ENCODE measurements at regions of chr6 and their contacts with region 1.

Region 1: GRCh38 chr6:114108119-114109002 is 137.4 kb upstream of the HDAC2 start:
- DNase-seq: peak in 1 of 2 experiments; percentile 87
- H3K4me3 ChIP-seq: no peak overlapping the region
- H3K27ac ChIP-seq: no peak overlapping the region
- H3K4me1 ChIP-seq: no peaks in the 10 kb centered on the region
- H3K27me3 ChIP-seq: no peaks in the 10 kb centered on the region
- CTCF ChIP-seq: peak; percentile 47 to 76 (median 73)
- EP300 ChIP-seq: no peak
- POLR2A ChIP-seq: no peak
- RAD21 ChIP-seq: peak; percentile 69 to 79

Region 2: DNA sequence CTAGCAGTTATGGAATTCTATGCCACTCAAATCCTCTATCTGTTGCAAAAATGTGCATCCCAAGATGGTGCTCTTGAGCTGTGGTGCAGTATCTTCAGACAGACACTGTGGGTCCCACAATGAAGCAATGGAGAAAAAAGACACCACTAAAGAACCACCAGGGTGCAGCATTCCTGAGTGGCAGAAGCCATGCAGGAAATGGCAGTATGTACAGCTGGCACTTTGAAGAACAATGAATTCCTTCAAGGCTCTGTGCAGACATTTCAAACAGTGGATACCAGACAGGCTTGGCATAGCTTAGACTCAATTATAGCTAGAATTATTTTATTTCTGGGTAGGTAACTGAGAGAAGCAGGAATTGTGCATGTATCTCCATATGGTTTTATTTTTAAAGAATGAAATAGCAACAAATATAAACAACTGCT is 113.4 kb before region 1 on chr6:
- CTCF ChIA-PET with region 1: interaction called, 77 read pairs
- POLR2A ChIA-PET with region 1: no interaction called
- DNase-seq: peak in 1 of 2 experiments; percentile 51
- H3K4me3 ChIP-seq: no peak overlapping the region
- H3K27ac ChIP-seq: no peak overlapping the region
- H3K4me1 ChIP-seq: peaks cover 0 to 8% (median 5%) of the 10 kb centered on the region in 4 experiments; a peak in 5 of 7 replicates
- H3K27me3 ChIP-seq: no peaks in the 10 kb centered on the region
- CTCF ChIP-seq: peak; percentile 32 to 98 (median 88)
- EP300 ChIP-seq: no peak
- POLR2A ChIP-seq: no peak
- RAD21 ChIP-seq: peak; percentile 96 to 97

Region 3: DNA sequence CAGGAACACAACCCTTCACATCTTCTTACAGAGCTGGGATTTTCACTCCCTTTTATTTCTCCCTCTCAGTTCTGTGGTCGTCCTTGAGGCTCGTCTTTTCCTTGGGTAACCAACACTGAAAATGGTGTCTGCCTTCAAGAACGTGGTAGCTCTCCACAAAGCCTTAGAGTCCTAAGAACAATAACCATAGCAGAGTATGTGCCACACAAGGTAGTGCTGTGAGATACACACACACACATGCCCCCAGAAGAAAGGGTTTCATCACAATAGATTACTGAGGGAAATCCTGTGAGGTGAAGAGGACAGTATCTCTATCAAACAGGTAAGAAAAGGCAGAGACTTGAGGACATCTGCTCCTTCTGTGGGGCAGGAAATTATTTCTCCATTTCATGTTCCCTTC is 32.6 kb before region 1 on chr6:
- CTCF ChIA-PET with region 1: interaction called, 10 read pairs
- POLR2A ChIA-PET with region 1: no interaction called
- DNase-seq: no peak
- H3K4me3 ChIP-seq: no peak overlapping the region
- H3K27ac ChIP-seq: no peak overlapping the region
- H3K4me1 ChIP-seq: no peaks in the 10 kb centered on the region
- H3K27me3 ChIP-seq: no peaks in the 10 kb centered on the region
- CTCF ChIP-seq: no peak
- EP300 ChIP-seq: no peak
- POLR2A ChIP-seq: no peak
- RAD21 ChIP-seq: no peak

Region 4: GRCh38 chr6:114096561-114097172 is 11.7 kb before region 1 on chr6:
- CTCF ChIA-PET with region 1: interaction called, 10 read pairs
- POLR2A ChIA-PET with region 1: no interaction called
- DNase-seq: no peak
- H3K4me3 ChIP-seq: no peak overlapping the region
- H3K27ac ChIP-seq: no peak overlapping the region
- H3K4me1 ChIP-seq: no peaks in the 10 kb centered on the region
- H3K27me3 ChIP-seq: no peaks in the 10 kb centered on the region
- CTCF ChIP-seq: peak in 2 of 3 experiments; percentile 31 to 35; a peak in 2 of 4 replicates
- EP300 ChIP-seq: no peak
- POLR2A ChIP-seq: no peak
- RAD21 ChIP-seq: peak; percentile 55 to 57

Region 5: GRCh38 chr6:114151070-114151690 is 42.8 kb after region 1 on chr6:
- CTCF ChIA-PET with region 1: interaction called, 12 read pairs
- POLR2A ChIA-PET with region 1: no interaction called
- DNase-seq: no peak
- H3K4me3 ChIP-seq: no peak overlapping the region
- H3K27ac ChIP-seq: no peak overlapping the region
- H3K4me1 ChIP-seq: peaks cover 0 to 9% (median 3%) of the 10 kb centered on the region in 4 experiments; a peak in 2 of 7 replicates
- H3K27me3 ChIP-seq: no peaks in the 10 kb centered on the region
- CTCF ChIP-seq: no peak
- EP300 ChIP-seq: no peak
- POLR2A ChIP-seq: no peak
- RAD21 ChIP-seq: no peak